Activated T-helper 1 cell treated with anti-CD3 and anti-CD28 coated beads, Interleukin-12 subunit alpha, Interleukin-12 subunit beta, Interleukin-2, Interleukin-4 antibody, amounts not matched to agents 30 ng/mL and 10 ng/mL and 1 ng/mL, durations not matched to agents 14 hours and 24 hours and 36 hours (primary cell): ENCODE measurements at regions of chr6 and their contacts with region 1.

Region 1: GRCh38 chr6:43053545-43054205 is at the start of gene CUL7:
- DNase-seq: peak; percentile 89
- H3K4me3 Mint-ChIP-seq: peak within 1 kb of the TSS; percentile 99
- H3K27ac Mint-ChIP-seq: peak within 1 kb of the TSS; percentile 98
- H3K4me1 Mint-ChIP-seq: peaks cover 53% of the 10 kb centered on the region
- H3K27me3 Mint-ChIP-seq: no peaks in the 10 kb centered on the region
- total RNA-seq, gene CUL7: 20.1 and 23.2 TPM in 2 replicates

Region 2: DNA sequence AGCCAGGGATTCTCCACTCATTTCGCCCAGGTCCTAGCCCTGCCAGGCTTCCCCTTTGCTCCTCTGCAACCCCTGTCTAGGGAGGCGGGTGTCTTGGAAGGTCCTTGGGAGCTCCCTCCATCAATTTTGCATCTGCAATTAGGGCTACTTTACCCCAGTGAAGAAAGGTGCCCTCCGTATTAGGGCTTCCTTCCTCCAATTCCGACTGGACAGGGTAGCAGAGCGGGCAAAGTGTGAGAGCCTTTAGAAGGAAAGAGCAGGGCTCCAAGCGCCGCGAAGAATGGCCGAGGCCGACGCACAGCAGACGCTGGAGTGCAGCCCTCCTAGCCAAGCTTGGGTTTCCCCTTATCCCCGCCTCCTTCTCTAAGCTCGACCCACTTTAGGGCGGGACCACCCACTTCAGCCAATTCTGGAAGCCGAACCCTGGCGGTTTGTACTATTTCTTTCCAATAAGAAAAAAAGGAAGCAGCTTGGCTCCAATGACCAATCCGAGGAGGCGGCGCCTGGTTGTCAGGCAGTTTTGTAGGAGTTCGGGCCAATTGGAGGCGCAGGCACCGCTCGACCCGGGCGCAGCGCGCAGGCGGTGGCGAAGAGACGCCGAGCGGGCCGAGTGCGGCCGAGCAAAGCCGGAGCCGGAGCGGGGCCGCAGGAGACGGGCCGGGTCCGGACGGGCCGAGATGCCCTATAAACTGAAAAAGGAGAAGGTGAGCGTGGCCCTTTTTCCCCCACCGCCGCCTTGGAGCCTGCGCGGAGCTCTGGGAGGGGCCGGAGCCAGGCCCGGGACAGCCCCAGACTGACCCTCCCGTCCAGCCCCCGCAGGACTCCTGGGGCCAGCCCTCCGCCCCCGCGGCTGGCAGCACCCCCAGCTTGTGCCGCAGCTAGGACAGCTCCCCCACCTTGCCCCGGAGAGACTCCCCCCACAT is 69.4 kb before region 1 on chr6 and contains the start of gene PPP2R5D:
- intact Hi-C with region 1: loop called (anchors 1 kb)
- DNase-seq: peak; percentile 97
- H3K4me3 Mint-ChIP-seq: peak within 1 kb of the TSS; percentile 92
- H3K27ac Mint-ChIP-seq: peak within 1 kb of the TSS; percentile 94
- H3K4me1 Mint-ChIP-seq: peaks cover 57% of the 10 kb centered on the region
- H3K27me3 Mint-ChIP-seq: no peaks in the 10 kb centered on the region
- total RNA-seq, gene PPP2R5D: 52.1 and 53.4 TPM in 2 replicates

Region 3: GRCh38 chr6:43086022-43086658 is 32.5 kb after region 1 on chr6:
- intact Hi-C with region 1: no loop called
- DNase-seq: no peak
- H3K4me3 Mint-ChIP-seq: no peak overlapping the region
- H3K27ac Mint-ChIP-seq: no peak overlapping the region
- H3K4me1 Mint-ChIP-seq: peaks cover 7% of the 10 kb centered on the region
- H3K27me3 Mint-ChIP-seq: peaks cover 18% of the 10 kb centered on the region